ENCODE measurements at regions of chr14 and their contacts with region 1.

Region 1: GRCh38 chr14:99266181-99267178 is 5.5 kb downstream of the BCL11B start:
- DNase-seq: peak; percentile 56 to 83
- ATAC-seq: peak; percentile 77

Region 2: GRCh38 chr14:98138666-98139065 is 1127.8 kb before region 1 on chr14:
- intact Hi-C with region 1: loop called in 1 of 2 experiments (anchors 10 kb)
- DNase-seq: peak in 1 of 2 donors; percentile 17
- ATAC-seq: peak; percentile 62

Measured in left colon (tissue), 2 donors.